A673 (cell line): ENCODE measurements at regions of chr15 and their contacts with region 1.

Region 1: GRCh38 chr15:56245871-56246814 is 2.5 kb upstream of the RFX7 start:
- DNase-seq: peak; percentile 95
- H3K4me3 ChIP-seq: peak overlapping the region; percentile 12
- H3K27ac ChIP-seq: peak overlapping the region; percentile 7
- H3K4me1 ChIP-seq: peaks cover 21% of the 10 kb centered on the region
- H3K27me3 ChIP-seq: no peaks in the 10 kb centered on the region
- CTCF ChIP-seq: peak; percentile 100

Region 2: DNA sequence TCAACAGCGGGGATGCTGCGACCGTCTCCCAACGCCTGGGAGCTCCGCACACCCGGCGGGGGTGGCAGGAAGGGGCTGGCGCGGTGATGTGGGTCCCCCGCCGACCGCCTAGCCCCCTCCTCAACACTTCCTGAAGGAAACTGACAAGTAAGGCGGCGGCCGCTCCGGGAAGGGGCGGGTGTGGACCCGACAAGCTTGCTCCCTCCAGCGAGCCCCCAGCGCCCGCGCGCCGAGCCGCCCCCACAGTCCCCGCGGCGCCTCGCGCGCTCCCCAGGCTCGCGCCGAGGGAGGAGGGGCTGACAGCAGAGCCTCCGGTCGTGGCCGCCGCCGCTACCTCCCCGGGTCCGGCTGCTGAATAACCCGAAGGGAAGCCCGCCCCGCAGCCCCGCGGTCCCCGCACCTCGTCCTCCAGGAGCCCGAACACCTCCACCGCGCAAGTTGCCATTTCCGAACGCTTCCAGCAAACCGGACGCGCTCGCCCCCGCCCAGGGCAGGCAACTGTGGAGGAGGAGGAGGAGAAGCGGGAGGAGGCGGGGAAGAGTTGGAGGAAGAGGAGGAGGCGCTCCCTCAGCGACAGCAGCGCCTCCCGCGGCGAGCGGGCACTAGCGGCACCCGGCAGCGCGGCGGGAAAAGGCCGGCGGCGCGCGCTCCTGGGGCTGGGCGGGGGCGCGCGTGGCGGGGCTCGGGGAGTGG is 252.9 kb before region 1 on chr15 and contains the start of gene NEDD4:
- CTCF ChIA-PET with region 1: no interaction called
- POLR2A ChIA-PET with region 1: no interaction called
- intact Hi-C with region 1: loop called (anchors 5 kb)
- DNase-seq: peak; percentile 95
- H3K4me3 ChIP-seq: peak within 1 kb of the TSS; percentile 92
- H3K27ac ChIP-seq: peak within 1 kb of the TSS; percentile 89
- H3K4me1 ChIP-seq: peaks cover 17% of the 10 kb centered on the region
- H3K27me3 ChIP-seq: no peaks in the 10 kb centered on the region
- CTCF ChIP-seq: peak; percentile 46
- total RNA-seq, gene NEDD4: 23.1 and 23.6 TPM in 2 replicates

Region 3: GRCh38 chr15:56064152-56064551 is 182.0 kb before region 1 on chr15:
- CTCF ChIA-PET with region 1: no interaction called
- POLR2A ChIA-PET with region 1: no interaction called
- intact Hi-C with region 1: no loop called
- DNase-seq: no peak
- H3K4me3 ChIP-seq: no peak overlapping the region
- H3K27ac ChIP-seq: no peak overlapping the region
- H3K4me1 ChIP-seq: no peaks in the 10 kb centered on the region
- H3K27me3 ChIP-seq: no peaks in the 10 kb centered on the region
- CTCF ChIP-seq: no peak

Region 4: DNA sequence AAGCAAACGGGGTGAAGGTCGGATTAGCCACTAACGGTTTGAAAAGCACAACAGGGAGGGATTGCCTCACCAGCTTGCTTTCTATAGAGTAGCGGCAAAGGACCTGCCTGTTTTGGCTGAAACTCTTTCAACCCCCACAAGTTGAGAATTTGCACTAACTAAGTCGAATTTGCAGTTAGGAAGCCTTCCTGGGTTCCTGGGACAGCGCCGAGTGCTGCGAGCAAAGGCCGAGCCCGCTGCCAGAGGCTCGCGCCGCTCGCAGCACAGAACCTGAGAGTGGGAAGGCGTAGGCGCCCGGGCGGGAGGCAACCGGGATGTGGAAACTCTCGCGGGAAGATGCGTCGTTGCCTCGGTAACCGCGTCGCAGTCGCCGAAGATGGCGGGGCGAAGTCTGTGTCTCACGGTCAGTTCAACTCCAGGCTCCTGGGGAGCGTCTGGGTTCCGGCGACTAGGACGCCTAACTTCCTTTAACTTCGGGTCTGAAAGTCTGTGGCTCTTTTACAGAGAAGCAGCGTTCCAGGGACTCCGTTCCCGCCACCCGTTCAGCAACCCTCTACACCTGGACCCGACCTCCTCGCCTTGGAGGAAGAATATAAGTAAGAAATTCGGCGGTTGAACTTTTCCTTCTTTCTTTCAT is 119.0 kb after region 1 on chr15 and contains the start of gene TEX9:
- CTCF ChIA-PET with region 1: no interaction called
- POLR2A ChIA-PET with region 1: no interaction called
- intact Hi-C with region 1: loop called (anchors 10 kb)
- DNase-seq: peak; percentile 93
- H3K4me3 ChIP-seq: peak within 1 kb of the TSS; percentile 61
- H3K27ac ChIP-seq: peak within 1 kb of the TSS; percentile 61
- H3K4me1 ChIP-seq: peaks cover 11% of the 10 kb centered on the region
- H3K27me3 ChIP-seq: no peaks in the 10 kb centered on the region
- CTCF ChIP-seq: no peak
- total RNA-seq, gene TEX9: 18.0 TPM in 2 replicates

Region 5: GRCh38 chr15:56428821-56429458 is 182.8 kb after region 1 on chr15:
- CTCF ChIA-PET with region 1: interaction called, 3 read pairs
- POLR2A ChIA-PET with region 1: interaction called, 8 read pairs
- intact Hi-C with region 1: loop called (anchors 1 kb)
- DNase-seq: peak; percentile 52
- H3K4me3 ChIP-seq: no peak overlapping the region
- H3K27ac ChIP-seq: no peak overlapping the region
- H3K4me1 ChIP-seq: no peaks in the 10 kb centered on the region
- H3K27me3 ChIP-seq: no peaks in the 10 kb centered on the region
- CTCF ChIP-seq: peak; percentile 72